ENCODE measurements at regions of chr6 and their contacts with region 1.

Region 1: GRCh38 chr6:21064756-21065340 is 528.7 kb upstream of the SOX4 start:
- DNase-seq: no peak
- H3K4me3 ChIP-seq: no peak overlapping the region
- H3K27ac ChIP-seq: peak overlapping the region; percentile 17 to 29
- H3K4me1 ChIP-seq: no peaks in the 10 kb centered on the region
- H3K27me3 ChIP-seq: no peaks in the 10 kb centered on the region
- CTCF ChIP-seq: no peak
- POLR2A ChIP-seq: no peak

Region 2: DNA sequence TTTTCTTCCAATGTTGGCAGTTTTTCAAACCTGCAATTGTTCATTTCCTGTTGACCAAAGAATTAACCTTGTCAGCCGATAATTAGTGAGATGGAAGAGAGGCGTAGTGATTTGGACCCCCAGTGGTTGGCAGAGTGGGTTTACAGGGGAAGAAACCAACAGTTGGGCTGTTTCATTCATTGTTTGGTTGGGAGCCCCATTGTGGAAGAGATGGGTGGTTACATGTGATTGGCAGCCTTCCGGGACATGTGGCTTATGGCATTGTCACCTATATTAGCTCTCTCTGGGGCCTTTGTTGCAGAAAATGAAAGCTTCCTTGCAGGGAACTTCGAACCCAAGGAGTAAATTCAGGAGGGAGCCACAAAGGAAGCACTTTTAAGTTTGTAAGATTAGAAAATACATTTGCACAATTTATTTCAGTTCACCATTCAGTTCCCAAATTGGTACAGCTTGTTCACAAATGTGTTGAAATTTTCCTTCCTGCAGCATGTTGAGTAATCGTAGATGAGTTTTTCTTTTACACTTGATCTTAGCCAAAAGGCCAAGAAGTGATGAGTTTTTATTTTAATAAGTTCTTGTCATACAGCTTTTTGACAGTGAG is 580.9 kb before region 1 on chr6:
- intact Hi-C with region 1: no loop called
- DNase-seq: no peak
- H3K4me3 ChIP-seq: no peak overlapping the region
- H3K27ac ChIP-seq: peak overlapping the region in 1 of 2 donors; percentile 33
- H3K4me1 ChIP-seq: no peaks in the 10 kb centered on the region
- H3K27me3 ChIP-seq: no peaks in the 10 kb centered on the region
- CTCF ChIP-seq: no peak
- POLR2A ChIP-seq: no peak

Region 3: GRCh38 chr6:21084656-21085055 is 19.8 kb after region 1 on chr6:
- intact Hi-C with region 1: loop called (anchors 2 kb)
- DNase-seq: no peak
- H3K4me3 ChIP-seq: no peak overlapping the region
- H3K27ac ChIP-seq: no peak overlapping the region
- H3K4me1 ChIP-seq: no peaks in the 10 kb centered on the region
- H3K27me3 ChIP-seq: no peaks in the 10 kb centered on the region
- CTCF ChIP-seq: no peak
- POLR2A ChIP-seq: no peak

Measured in breast epithelium (tissue), 4 donors.